GM13977 (cell line): ENCODE measurements at regions of chr14 and their contacts with region 1.

Region 1: DNA sequence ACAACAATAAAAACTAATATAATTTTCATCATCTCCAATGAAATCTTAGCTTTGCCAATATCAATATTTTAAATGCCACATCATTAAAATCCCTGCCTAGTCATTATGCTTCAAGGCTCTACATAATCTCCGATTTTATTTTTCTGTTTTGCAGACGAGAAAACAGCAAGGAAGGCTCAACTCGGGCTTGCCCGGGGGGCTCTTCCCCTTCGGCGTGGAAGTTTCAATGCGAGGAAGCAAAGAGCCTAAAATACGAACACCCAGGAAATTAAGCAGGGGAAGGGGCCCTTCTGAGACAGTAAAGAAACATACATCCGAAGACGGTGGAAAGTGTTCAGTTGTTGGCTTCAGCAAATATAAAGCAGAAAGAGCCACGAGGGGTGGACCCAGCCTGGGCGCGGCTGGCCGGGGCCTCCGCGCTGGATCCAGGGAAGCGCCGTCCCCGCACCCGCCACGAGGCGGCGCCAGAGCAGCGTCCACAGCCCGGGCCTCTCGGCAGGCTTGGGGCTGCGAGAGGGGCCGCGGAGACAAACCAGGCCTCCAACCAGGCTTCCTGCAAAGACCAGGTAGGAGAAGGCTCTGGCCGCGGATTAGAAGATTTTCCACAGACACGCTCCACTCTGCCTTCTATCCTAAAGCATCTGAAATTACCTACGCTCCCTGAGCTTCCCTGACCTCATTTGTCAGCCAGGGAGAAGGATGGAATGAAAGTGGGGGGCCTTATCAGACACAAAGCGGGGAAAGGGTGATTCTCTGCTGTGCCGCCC is 77.2 kb downstream of the SERPINA3 start:
- DNase-seq: peak; percentile 81
- CTCF ChIP-seq: peak; percentile 97

Region 2: GRCh38 chr14:95361373-95362137 is 672.2 kb after region 1 on chr14:
- in situ Hi-C with region 1: loop called (anchors 25 kb)
- DNase-seq: peak; percentile 78
- CTCF ChIP-seq: peak; percentile 76